Activated CD4-positive, alpha-beta memory T cell treated with anti-CD3 and anti-CD28 coated beads for 36 hours (primary cell): ENCODE measurements at regions of chr11 and their contacts with region 1.

Region 1: DNA sequence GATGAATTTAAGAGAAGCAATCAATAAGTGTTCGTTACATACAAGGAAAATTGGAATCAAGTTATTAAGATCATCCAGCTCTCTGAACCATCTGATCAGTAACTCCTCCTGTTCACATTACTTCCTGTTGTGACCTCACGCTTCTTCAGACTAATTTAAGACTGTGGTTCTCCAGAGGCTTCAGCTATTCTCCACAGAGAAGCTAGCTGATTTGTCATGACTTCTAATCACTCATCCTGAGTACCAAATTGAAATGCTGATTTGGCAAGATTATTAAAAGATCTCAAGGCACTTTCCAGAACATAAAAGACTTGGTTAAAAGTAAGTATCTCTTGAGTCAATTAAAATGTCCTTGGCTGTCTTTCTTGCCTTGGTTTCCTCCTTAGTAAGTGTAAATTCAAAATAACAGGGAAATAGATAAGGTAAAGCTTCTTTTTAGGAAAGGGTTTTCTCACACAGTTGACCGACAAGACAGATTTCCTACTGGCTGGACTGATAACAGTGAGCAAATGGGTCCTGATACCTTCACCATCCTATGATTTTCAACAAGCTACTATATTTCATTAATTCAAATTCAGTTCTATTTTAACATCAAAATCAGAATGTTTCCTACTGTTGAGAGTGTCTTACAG is 38.5 kb downstream of the GAB2 start:
- DNase-seq: no peak
- H3K4me3 Mint-ChIP-seq: no peak overlapping the region
- H3K27ac Mint-ChIP-seq: no peak overlapping the region
- H3K4me1 Mint-ChIP-seq: no peaks in the 10 kb centered on the region
- H3K27me3 Mint-ChIP-seq: no peaks in the 10 kb centered on the region

Region 2: DNA sequence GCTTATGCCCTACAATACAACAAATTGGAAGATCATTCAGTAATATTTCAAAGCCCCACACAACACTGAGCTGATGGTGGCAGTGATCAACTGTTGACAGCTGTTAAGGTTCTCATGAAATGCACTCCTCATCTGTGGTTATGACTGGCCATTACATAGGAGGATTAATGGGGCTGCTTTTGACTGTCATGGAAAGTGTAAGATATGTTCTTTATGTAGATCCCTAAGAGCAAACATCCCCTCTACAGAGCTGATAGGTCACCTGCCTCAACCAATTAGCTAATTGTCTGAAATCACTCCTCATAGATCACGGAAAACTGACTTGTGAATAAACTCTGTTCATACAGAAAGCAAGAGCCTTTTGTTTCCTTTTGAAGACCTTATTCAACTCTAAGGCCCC is 39.7 kb before region 1 on chr11:
- CTCF ChIA-PET with region 1: no interaction called
- POLR2A ChIA-PET with region 1: no interaction called
- intact Hi-C with region 1: loop called (anchors 1 kb)
- DNase-seq: no peak
- H3K4me3 Mint-ChIP-seq: no peak overlapping the region
- H3K27ac Mint-ChIP-seq: peak overlapping the region; percentile 70
- H3K4me1 Mint-ChIP-seq: peaks cover 31% of the 10 kb centered on the region
- H3K27me3 Mint-ChIP-seq: no peaks in the 10 kb centered on the region